A549 (cell line): ENCODE measurements at regions of chr9 and their contacts with region 1.

Region 1: GRCh38 chr9:6305954-6306563 is 22.1 kb upstream of the TPD52L3 start:
- DNase-seq: peak; percentile 23 to 56
- ATAC-seq: peak; percentile 78 to 82
- H3K4me3 ChIP-seq: no peak overlapping the region
- H3K27ac ChIP-seq: no peak overlapping the region
- H3K4me1 ChIP-seq: no peaks in the 10 kb centered on the region
- CTCF ChIP-seq: peak; percentile 80
- EP300 ChIP-seq: no peak
- POLR2A ChIP-seq: no peak
- RAD21 ChIP-seq: peak; percentile 86 to 90

Region 2: DNA sequence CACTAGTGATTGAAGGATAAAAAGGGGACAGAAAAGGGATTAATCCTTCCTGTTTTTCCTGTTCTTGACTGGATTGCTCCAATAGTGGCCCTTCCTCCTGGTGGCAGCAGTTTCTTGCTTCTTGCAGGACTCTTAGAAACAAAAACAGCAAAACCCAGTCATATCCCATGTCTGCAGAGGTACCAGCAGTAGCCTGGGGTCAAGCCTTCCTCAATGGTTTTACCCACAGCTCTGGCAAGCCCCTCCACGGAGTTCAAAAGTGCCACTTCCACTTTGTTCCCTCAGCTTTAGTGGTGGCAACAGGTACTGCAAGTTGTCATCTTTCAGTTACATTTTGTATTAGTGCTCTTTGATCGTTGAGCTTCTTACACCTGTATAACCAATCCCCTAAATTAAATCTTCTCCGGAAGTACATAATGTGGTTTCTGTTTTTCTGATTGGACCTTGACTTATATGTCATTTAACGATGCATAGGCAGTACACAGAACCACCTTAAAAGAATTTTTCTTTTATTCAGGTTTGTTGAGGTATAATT is 282.0 kb before region 1 on chr9:
- CTCF ChIA-PET with region 1: interaction called, 10 read pairs
- POLR2A ChIA-PET with region 1: no interaction called
- DNase-seq: peak; percentile 35 to 48
- ATAC-seq: peak; percentile 84 to 90
- H3K4me3 ChIP-seq: no peak overlapping the region
- H3K27ac ChIP-seq: peak overlapping the region in 1 of 2 experiments; percentile 63; a peak in 2 of 6 replicates
- H3K4me1 ChIP-seq: 0 out of 3 replicates have a peak, but pooled peaks cover under 1% of the 10 kb centered on the region
- CTCF ChIP-seq: peak; percentile 37; the same call in 2 of the 3 replicates
- EP300 ChIP-seq: no peak
- POLR2A ChIP-seq: no peak
- RAD21 ChIP-seq: no peak

Region 3: GRCh38 chr9:6049798-6050197 is 256.3 kb before region 1 on chr9:
- CTCF ChIA-PET with region 1: interaction called, 158 read pairs
- POLR2A ChIA-PET with region 1: no interaction called
- DNase-seq: peak in 1 of 2 experiments; percentile 59
- ATAC-seq: peak in 1 of 2 experiments; percentile 46; a peak in 3 of 6 replicates
- H3K4me3 ChIP-seq: no peak overlapping the region
- H3K27ac ChIP-seq: no peak overlapping the region
- H3K4me1 ChIP-seq: no peaks in the 10 kb centered on the region
- CTCF ChIP-seq: peak; percentile 24; the same call in 1 of the 3 replicates
- EP300 ChIP-seq: no peak
- POLR2A ChIP-seq: no peak
- RAD21 ChIP-seq: peak in 1 of 2 experiments; percentile 45; a peak in 2 of 5 replicates

Region 4: GRCh38 chr9:6055213-6055612 is 250.8 kb before region 1 on chr9:
- CTCF ChIA-PET with region 1: interaction called, 158 read pairs
- POLR2A ChIA-PET with region 1: no interaction called
- DNase-seq: peak; percentile 49 to 91
- ATAC-seq: peak; percentile 91 to 92
- H3K4me3 ChIP-seq: no peak overlapping the region
- H3K27ac ChIP-seq: no peak overlapping the region
- H3K4me1 ChIP-seq: no peaks in the 10 kb centered on the region
- CTCF ChIP-seq: peak; percentile 86
- EP300 ChIP-seq: no peak
- POLR2A ChIP-seq: no peak
- RAD21 ChIP-seq: peak; percentile 93 to 94

Region 5: GRCh38 chr9:6068983-6069382 is 237.1 kb before region 1 on chr9:
- CTCF ChIA-PET with region 1: interaction called, 36 read pairs
- POLR2A ChIA-PET with region 1: no interaction called
- DNase-seq: no peak
- ATAC-seq: no peak
- H3K4me3 ChIP-seq: no peak overlapping the region
- H3K27ac ChIP-seq: no peak overlapping the region
- H3K4me1 ChIP-seq: no peaks in the 10 kb centered on the region
- CTCF ChIP-seq: no peak
- EP300 ChIP-seq: no peak
- POLR2A ChIP-seq: no peak
- RAD21 ChIP-seq: no peak

Region 6: GRCh38 chr9:6328103-6328502 is 22.0 kb after region 1 on chr9 and contains the start of gene TPD52L3:
- CTCF ChIA-PET with region 1: interaction called, 12 read pairs
- POLR2A ChIA-PET with region 1: no interaction called
- DNase-seq: no peak
- ATAC-seq: no peak
- H3K4me3 ChIP-seq: no peak within 1 kb of the TSS
- H3K27ac ChIP-seq: no peak within 1 kb of the TSS
- H3K4me1 ChIP-seq: no peaks in the 10 kb centered on the region
- CTCF ChIP-seq: no peak
- EP300 ChIP-seq: no peak
- POLR2A ChIP-seq: no peak
- RAD21 ChIP-seq: no peak
- polyA plus RNA-seq, gene TPD52L3: not detected in 2 replicates

Region 7: DNA sequence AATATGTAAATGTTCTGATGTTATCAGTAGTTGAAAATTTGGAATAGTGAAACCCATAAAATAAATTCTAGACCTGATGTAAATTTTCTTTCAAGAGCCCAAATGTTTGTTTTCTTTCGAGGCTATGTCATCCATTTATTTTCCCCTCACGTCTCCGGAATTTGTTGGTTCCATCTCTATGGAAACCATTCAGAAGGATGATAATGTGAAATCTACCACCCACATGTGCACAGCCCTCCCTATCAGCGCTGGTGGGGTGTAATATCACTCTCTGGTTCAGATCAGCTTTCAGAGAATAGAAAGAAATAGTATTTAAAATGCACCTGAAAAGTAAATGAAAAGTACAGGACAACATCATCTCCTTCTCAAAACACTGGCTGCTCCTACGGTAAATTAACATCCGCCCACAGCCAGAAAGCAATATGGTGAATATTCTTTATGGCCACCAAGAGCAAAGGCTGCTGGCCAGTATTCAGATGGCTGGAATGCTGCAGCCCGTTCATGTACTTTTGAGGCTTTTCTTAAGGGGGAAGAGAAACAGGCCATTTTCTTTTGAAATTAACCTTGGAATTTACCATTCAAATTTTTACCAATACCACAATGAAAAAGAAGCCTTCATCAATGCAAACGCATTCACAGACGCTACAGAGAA is 311.0 kb after region 1 on chr9:
- CTCF ChIA-PET with region 1: no interaction called
- POLR2A ChIA-PET with region 1: no interaction called
- DNase-seq: no peak
- ATAC-seq: no peak
- H3K4me3 ChIP-seq: no peak overlapping the region
- H3K27ac ChIP-seq: no peak overlapping the region
- H3K4me1 ChIP-seq: no peaks in the 10 kb centered on the region
- CTCF ChIP-seq: no peak
- EP300 ChIP-seq: no peak
- POLR2A ChIP-seq: no peak
- RAD21 ChIP-seq: no peak